Activated T-helper 2 cell treated with anti-CD3 and anti-CD28 coated beads, Interferon-gamma antibody, Interleukin-2, Interleukin-4, amounts not matched to agents 10 μg/mL and 5 μg/mL and 100 μg/mL, durations not matched to agents 14 hours and 24 hours and 36 hours (primary cell): ENCODE measurements at regions of chr16 and their contacts with region 1.

Region 1: DNA sequence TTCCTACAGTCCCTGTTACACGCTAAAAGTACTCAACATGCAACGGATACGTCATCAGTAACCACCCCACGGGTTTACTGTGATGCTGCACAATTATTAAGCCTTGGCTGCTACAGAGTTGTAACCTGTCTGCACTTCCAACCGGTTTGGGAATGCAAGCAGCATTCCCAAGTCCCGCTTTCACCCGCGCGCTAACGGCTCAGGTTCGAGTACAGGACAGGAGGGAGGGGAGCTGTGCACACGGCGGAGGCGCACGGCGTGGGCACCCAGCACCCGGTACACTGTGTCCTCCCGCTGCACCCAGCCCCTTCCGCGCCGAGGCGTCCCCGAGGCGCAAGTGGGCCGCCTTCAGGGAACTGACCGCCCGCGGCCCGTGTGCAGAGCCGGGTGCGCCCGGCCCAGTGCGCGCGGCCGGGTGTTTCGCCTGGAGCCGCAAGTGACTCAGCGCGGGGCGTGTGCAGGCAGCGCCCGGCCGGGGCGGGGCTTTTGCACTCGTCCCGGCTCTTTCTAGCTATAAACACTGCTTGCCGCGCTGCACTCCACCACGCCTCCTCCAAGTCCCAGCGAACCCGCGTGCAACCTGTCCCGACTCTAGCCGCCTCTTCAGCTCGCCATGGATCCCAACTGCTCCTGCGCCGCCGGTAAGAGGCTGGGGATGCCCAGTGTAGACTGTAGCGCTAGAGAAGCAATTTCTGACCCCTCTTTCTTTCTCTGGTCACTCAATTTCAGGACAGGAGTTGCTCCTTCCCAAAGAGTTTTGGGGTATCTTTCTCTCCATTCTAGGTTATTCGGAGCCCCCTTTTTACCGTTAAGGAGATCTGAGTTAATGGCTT is at the start of gene MT2A:
- DNase-seq: peak; percentile 88
- H3K4me3 Mint-ChIP-seq: peak within 1 kb of the TSS; percentile 97
- H3K27ac Mint-ChIP-seq: peak within 1 kb of the TSS; percentile 99
- H3K4me1 Mint-ChIP-seq: peaks cover 55% of the 10 kb centered on the region
- H3K27me3 Mint-ChIP-seq: no peaks in the 10 kb centered on the region
- total RNA-seq, gene MT2A: 827 and 878 TPM in 2 replicates

Region 2: DNA sequence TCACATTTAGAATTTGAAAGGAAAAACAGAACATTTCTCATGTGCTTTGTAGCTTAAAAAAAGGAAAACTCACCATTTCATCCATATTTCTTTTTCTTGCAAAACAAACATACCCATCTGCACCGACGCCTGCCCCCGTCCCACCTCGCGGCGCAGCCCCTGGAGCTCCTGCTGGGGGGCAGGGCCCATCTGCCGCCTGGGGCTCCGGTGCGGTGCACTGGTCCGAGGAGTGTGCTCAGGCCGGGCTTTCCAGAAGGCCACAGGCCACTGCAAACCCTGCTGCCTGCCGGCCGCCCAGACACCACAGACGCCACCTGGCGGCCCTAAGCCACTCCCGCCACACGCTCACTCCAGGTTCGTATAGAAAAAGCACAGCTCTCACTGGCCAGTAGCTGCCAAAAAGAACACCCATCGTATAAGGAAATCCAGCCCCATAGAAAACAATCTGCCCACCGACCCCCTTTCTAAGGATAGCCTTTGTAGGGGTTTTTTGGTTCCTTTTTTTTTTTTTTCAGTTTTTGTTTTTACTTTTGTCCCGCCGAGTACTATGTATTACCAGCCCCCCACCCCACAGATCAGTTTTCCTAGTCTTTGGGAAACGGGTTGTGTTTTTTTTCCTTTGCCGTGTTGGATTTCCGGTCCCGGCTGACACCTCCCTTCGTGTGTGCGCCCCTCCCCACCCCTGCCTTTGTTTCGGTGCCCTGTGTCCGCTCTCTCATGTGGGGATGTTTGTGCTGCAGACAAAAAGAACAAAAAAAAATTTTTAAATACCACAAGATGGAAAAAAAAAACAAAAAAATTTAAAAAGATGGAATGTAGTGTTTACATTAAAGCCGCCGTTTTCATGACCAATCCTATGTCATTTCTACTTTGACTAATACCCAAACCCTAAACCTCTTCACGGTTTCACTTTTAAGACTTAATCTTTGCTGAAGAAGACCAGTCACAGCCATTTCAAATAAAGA is 251.7 kb before region 1 on chr16:
- intact Hi-C with region 1: loop called (anchors 2 kb)
- DNase-seq: peak; percentile 49
- H3K4me3 Mint-ChIP-seq: peak overlapping the region; percentile 86
- H3K27ac Mint-ChIP-seq: peak overlapping the region; percentile 91
- H3K4me1 Mint-ChIP-seq: peaks cover 32% of the 10 kb centered on the region
- H3K27me3 Mint-ChIP-seq: no peaks in the 10 kb centered on the region

Region 3: GRCh38 chr16:56506941-56507340 is 101.3 kb before region 1 on chr16:
- intact Hi-C with region 1: no loop called
- DNase-seq: no peak
- H3K4me3 Mint-ChIP-seq: no peak overlapping the region
- H3K27ac Mint-ChIP-seq: no peak overlapping the region
- H3K4me1 Mint-ChIP-seq: no peaks in the 10 kb centered on the region
- H3K27me3 Mint-ChIP-seq: no peaks in the 10 kb centered on the region

Region 4: GRCh38 chr16:56519459-56520250 is 88.6 kb before region 1 on chr16 and contains the start of gene BBS2:
- intact Hi-C with region 1: no loop called
- DNase-seq: peak; percentile 86
- H3K4me3 Mint-ChIP-seq: peak within 1 kb of the TSS; percentile 79
- H3K27ac Mint-ChIP-seq: peak within 1 kb of the TSS; percentile 50
- H3K4me1 Mint-ChIP-seq: peaks cover 8% of the 10 kb centered on the region
- H3K27me3 Mint-ChIP-seq: no peaks in the 10 kb centered on the region
- total RNA-seq, gene BBS2: 11.3 and 18.0 TPM in 2 replicates

Region 5: DNA sequence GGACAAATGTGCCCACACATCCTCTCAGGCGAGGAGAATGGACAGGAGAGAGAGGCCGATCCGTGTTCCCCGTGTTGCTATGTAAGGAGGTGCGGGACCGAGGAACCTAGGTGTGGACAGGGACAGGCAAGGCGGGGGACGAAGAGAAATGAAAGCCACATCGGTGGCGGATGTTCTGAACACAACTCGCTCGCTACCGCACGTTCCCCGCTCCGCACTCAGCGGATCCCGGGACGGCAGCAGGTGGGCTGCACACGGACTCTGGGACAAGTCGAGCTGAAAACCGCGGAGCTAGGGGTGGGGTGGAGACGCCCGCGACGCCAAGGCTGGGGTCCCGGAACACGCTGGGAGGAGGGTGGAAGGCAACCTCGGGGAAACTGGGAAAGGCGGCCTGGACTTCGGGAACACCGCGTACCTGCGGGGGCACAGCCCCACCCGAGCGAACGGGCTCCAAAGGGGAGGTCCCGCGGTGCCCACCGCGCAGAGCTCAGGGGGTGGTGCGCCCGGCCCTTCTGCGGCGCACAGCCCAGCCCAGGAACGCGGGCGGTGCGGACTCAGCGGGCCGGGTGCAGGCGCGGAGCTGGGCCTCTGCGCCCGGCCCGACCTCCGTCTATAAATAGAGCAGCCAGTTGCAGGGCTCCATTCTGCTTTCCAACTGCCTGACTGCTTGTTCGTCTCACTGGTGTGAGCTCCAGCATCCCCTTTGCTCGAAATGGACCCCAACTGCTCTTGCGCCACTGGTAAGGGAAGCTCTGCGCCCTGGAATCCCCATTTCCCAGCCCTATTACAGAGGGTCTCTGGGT is 17.1 kb after region 1 on chr16 and contains the start of gene MT1E:
- intact Hi-C with region 1: loop called (anchors 1 kb)
- DNase-seq: peak; percentile 67
- H3K4me3 Mint-ChIP-seq: peak within 1 kb of the TSS; percentile 94
- H3K27ac Mint-ChIP-seq: peak within 1 kb of the TSS; percentile 95
- H3K4me1 Mint-ChIP-seq: peaks cover 24% of the 10 kb centered on the region
- H3K27me3 Mint-ChIP-seq: peaks cover 5% of the 10 kb centered on the region
- total RNA-seq, gene MT1E: 181 and 184 TPM in 2 replicates

Region 6: GRCh38 chr16:56657555-56658326 is 49.5 kb after region 1 on chr16 and contains the start of gene MT1F:
- intact Hi-C with region 1: no loop called
- DNase-seq: peak; percentile 47
- H3K4me3 Mint-ChIP-seq: peak within 1 kb of the TSS; percentile 96
- H3K27ac Mint-ChIP-seq: peak within 1 kb of the TSS; percentile 79
- H3K4me1 Mint-ChIP-seq: peaks cover 19% of the 10 kb centered on the region
- H3K27me3 Mint-ChIP-seq: peaks cover 22% of the 10 kb centered on the region
- total RNA-seq, gene MT1F: 6.4 and 8.0 TPM in 2 replicates

Region 7: DNA sequence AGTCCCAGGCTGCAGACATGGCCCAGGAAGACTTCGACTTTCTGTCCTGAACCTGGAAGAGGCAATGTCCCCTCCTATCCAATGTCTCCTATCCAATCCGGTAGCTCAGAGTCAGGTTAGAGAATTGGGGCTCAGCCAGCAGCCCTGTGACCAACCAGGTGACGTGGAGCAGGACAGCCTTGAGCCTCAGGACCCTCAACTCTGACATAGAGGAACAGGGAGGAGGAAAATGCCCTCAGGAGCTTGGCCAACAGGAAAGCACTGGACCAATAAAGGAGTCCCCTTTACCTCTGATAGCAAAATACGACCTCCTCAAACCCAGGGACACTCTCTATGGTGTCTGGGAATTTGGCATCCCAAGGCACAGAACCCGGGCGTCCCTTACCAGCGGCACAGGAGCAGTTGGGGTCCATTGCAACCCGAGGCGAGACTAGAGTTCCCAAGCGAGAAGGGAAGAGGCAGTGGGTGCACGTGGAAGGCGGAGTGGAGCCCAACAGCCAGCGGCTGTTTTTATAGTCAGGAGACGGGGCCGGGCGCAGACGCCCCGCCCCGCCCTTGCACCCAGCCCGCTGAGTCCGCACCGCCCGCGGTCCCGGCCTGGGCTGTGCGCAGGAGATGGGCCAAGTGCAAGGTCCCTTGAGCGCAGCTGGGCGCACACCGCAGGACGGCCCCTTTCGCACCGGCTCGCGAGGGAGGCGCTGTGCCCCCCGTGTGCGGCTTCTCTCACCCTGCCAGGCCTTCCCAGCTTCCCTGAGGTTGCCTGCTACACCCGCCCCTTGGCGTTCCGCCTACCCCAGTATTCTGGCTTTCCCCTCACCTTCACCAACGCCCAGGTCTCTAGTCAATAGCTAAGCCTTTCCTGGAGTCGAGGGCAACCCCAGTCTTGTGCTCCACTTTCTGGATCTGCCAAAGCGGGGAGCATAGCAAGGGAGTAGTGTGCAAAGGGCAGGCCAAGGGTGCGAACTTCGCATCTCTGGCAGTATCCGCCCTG is 59.6 kb after region 1 on chr16 and contains the start of gene MT1G:
- intact Hi-C with region 1: loop called (anchors 2 kb)
- DNase-seq: peak; percentile 40
- H3K4me3 Mint-ChIP-seq: no peak within 1 kb of the TSS
- H3K27ac Mint-ChIP-seq: no peak within 1 kb of the TSS
- H3K4me1 Mint-ChIP-seq: peaks cover 49% of the 10 kb centered on the region
- H3K27me3 Mint-ChIP-seq: peaks cover 46% of the 10 kb centered on the region
- total RNA-seq, gene MT1G: 21.1 and 24.5 TPM in 2 replicates

Region 8: DNA sequence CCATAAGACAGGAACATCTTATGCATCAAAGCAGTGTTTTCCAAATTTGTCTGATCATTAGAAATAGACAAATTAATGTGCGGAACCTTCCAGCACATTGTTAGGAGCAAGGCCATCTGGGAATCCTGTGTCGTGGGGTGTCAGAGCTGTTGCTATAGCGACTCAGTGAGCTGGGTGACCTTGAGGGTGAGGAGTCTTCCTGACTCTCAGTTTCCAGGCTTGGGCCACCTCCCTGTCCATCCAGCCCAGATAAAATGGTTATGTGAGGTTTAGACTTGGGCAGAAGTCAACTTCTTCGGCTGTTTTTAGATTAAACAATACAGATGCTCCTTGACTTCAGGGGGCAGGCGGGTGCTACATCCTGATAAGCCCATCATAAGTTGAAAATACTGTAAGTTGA is 94.6 kb after region 1 on chr16:
- intact Hi-C with region 1: loop called (anchors 1 kb)
- DNase-seq: no peak
- H3K4me3 Mint-ChIP-seq: no peak overlapping the region
- H3K27ac Mint-ChIP-seq: no peak overlapping the region
- H3K4me1 Mint-ChIP-seq: peaks cover 12% of the 10 kb centered on the region
- H3K27me3 Mint-ChIP-seq: no peaks in the 10 kb centered on the region

Region 9: DNA sequence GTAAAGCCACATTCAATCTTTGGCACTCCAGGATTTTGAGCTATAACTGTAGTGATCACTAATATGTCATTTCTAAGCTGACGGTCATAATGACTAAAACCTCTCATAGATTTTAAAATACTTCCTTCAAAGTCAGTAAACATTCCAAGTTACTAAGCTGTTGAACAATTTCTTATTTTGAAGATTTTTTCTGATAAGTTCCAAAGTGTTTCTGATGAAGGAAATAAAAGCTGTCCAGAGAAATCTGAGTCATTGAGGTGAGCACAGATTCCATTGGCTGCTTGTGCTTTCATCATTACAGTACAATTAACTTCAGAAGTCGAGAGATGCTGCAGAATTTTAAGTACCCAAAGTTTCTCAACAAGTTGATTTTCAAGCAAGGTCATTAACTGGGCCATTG is 405.0 kb after region 1 on chr16:
- intact Hi-C with region 1: loop called (anchors 10 kb)
- DNase-seq: no peak
- H3K4me3 Mint-ChIP-seq: peak overlapping the region; percentile 14
- H3K27ac Mint-ChIP-seq: peak overlapping the region; percentile 97
- H3K4me1 Mint-ChIP-seq: peaks cover 74% of the 10 kb centered on the region
- H3K27me3 Mint-ChIP-seq: no peaks in the 10 kb centered on the region

Region 10: GRCh38 chr16:57300387-57301125 is 692.3 kb after region 1 on chr16:
- intact Hi-C with region 1: loop called (anchors 1 kb)
- DNase-seq: peak; percentile 99
- H3K4me3 Mint-ChIP-seq: no peak overlapping the region
- H3K27ac Mint-ChIP-seq: no peak overlapping the region
- H3K4me1 Mint-ChIP-seq: peaks cover 16% of the 10 kb centered on the region
- H3K27me3 Mint-ChIP-seq: peaks cover 2% of the 10 kb centered on the region